ENCODE measurements at regions of chr2 and their contacts with region 1.

Region 1: DNA sequence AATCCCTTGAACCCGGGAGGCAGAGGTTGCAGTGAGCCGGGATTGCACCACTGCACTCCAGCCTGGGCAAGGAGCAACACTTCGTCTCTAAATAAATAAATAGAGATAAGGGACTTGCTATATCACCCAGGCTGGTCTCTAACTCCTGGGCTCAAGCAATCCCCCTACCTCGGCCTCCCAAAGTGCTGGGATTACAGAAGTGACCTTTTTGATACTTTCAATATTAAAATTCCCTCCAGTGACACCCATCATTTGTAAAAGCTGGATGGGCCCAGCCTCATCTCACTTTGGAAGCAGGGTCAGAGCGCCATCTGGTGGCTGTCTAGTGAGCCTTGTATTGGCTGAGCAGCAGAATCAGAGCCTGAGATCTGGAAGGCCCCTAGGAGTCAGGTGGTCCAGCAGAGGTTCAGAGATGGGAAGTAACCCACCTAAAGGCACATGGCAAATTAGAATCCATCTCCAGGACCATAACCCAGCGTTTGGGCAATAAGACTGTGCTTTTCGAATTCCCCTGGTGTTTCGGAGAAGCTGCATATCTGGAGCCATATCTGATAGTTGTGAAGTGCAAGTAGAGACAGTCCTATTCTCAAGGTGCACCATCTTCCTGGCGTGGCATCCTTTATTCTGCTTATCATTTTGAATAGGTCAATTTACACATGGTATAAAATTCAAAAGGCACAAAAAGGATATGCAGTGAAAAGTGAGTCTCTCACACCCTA is 18.3 kb upstream of the SLC35F6 start:
- H3K4me3 ChIP-seq: no peak overlapping the region
- H3K27ac ChIP-seq: no peak overlapping the region
- H3K4me1 ChIP-seq: no peaks in the 10 kb centered on the region
- CTCF ChIP-seq: peak; percentile 82

Region 2: GRCh38 chr2:26598336-26598995 is 147.3 kb before region 1 on chr2:
- CTCF ChIA-PET with region 1: interaction called, 198 read pairs
- POLR2A ChIA-PET with region 1: no interaction called
- H3K4me3 ChIP-seq: no peak overlapping the region
- H3K27ac ChIP-seq: no peak overlapping the region
- H3K4me1 ChIP-seq: no peaks in the 10 kb centered on the region
- CTCF ChIP-seq: no peak

Region 3: DNA sequence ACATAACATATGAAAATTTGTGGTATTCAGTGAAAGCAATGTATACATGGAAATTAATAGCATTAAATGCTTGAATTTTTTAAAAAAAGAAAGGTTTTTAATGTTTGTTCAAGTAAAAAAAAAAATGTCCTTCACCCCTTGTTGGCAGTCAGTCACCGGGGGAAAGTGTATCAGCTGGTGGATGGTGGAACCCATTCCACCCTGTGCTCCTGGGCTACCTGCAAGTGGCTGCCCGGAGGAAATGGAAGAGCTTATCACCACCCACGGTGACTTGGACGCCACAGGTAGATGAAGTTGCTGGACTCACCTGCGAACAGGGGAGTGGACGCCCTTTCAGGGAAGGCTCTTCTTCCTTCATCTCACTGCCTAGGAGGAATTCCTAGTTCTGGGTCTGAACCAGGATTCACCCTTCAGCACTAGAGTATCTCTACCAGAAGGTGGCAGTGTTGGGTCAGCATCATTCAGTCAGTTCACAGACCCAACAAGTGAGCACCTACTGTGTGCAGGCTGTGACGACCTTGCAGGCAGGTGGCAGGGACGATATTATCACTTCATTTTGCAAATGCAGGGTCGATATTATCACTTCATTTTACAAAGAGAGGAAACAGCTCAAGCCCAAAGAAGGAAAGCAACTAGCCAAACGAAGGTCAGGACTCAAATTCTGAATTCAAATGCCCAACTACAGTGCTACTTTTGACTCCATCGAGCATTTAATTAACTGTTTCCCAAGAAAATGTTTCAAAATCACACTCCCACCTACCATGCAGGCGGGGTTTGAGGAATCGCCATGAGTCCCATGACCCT is 140.4 kb before region 1 on chr2:
- CTCF ChIA-PET with region 1: interaction called, 198 read pairs
- POLR2A ChIA-PET with region 1: no interaction called
- H3K4me3 ChIP-seq: no peak overlapping the region
- H3K27ac ChIP-seq: no peak overlapping the region
- H3K4me1 ChIP-seq: no peaks in the 10 kb centered on the region
- CTCF ChIP-seq: peak; percentile 65

Region 4: GRCh38 chr2:26615371-26615801 is 130.4 kb before region 1 on chr2:
- CTCF ChIA-PET with region 1: interaction called, 11 read pairs
- POLR2A ChIA-PET with region 1: no interaction called
- H3K4me3 ChIP-seq: no peak overlapping the region
- H3K27ac ChIP-seq: no peak overlapping the region
- H3K4me1 ChIP-seq: peaks cover 6% of the 10 kb centered on the region; the same call in 1 of the 2 replicates
- CTCF ChIP-seq: no peak

Region 5: DNA sequence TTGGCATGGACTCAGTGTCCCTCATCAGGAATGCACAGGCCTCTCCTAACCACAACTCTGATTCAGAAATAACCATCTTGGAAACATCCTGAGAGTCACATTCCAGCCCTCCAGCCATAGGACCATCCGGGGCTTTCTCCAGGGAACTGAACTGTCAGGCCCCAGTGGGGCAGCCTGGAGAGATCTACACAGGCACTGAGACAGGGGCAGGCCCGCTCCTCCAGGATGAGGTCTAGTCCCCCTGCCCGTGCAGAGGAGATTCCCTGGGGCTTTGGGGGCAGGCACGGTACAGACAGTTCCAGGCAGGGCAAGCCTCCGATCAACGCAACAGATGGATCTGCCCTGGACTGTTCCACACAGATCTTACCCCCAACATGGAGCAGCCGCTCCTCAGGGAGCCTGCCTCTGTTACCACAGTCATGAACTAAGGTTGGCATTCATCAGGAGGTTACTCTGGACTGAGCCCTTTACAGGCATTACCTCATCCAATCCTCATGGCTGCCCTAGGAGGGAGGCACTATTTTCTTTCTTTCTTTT is 41.3 kb before region 1 on chr2:
- CTCF ChIA-PET with region 1: no interaction called
- POLR2A ChIA-PET with region 1: no interaction called
- H3K4me3 ChIP-seq: no peak overlapping the region
- H3K27ac ChIP-seq: no peak overlapping the region
- H3K4me1 ChIP-seq: no peaks in the 10 kb centered on the region
- CTCF ChIP-seq: no peak

Region 6: DNA sequence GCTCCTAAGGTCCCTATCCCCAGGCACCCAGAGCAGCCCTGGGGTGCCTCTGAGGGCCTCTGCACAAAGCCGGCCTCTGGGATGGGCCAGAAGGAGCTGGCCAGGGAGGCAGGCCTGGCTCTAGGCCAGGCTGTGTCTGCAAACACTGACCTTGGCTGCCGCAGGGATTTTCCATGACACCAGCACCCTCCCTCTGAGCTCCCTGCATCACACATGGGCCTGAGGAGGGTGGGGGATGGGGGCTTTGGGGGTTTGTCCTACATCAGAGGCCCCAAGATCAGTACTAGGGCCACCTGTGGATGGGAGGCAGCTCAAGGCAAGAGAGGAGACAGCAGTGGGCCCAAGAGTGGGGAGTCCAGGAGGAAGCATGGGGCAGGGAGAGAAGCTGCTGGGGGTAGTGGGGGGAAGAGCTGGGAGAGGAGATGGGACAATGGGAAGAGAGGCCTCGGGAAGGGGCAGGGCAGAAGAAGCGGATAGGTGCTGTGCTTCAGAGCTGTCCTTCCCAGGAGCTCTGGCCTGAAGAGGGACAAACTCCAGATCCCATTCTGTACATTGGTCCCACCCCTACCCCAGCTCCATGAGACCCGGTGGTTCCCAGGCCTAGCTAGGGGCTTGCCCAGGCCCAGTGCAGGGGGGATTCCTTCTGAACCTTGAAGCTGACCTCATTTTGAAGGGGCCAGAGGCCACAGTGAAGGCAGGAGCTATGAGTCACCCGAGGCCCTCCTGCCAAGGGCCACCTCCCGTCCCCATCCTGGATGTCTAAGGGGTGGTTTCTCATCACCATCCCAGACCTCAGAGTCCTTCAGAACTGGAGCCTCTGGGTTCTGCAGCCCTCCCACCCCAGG is 25.2 kb before region 1 on chr2:
- CTCF ChIA-PET with region 1: interaction called, 13 read pairs
- POLR2A ChIA-PET with region 1: no interaction called
- H3K4me3 ChIP-seq: no peak overlapping the region
- H3K27ac ChIP-seq: no peak overlapping the region
- H3K4me1 ChIP-seq: peaks cover 6% of the 10 kb centered on the region
- CTCF ChIP-seq: no peak

Region 7: GRCh38 chr2:26757873-26758789 is 12.4 kb after region 1 on chr2:
- CTCF ChIA-PET with region 1: interaction called, 20 read pairs
- POLR2A ChIA-PET with region 1: no interaction called
- H3K4me3 ChIP-seq: no peak overlapping the region
- H3K27ac ChIP-seq: no peak overlapping the region
- H3K4me1 ChIP-seq: no peaks in the 10 kb centered on the region
- CTCF ChIP-seq: no peak

Measured in HEK293 (cell line).